Esophagus muscularis mucosa (tissue), 4 donors: ENCODE measurements at regions of chr17 and their contacts with region 1.

Region 1: GRCh38 chr17:40341808-40342503 is 22.6 kb downstream of the GJD3 start:
- DNase-seq: no peak
- H3K4me3 ChIP-seq: peak overlapping the region; percentile 87 to 97 (median 92)
- H3K27ac ChIP-seq: peak overlapping the region; percentile 96 to 98 (median 96)
- H3K4me1 ChIP-seq: peaks cover 62 to 87% (median 84%) of the 10 kb centered on the region in 4 donors
- H3K27me3 ChIP-seq: no peaks in the 10 kb centered on the region
- CTCF ChIP-seq: no peak
- EP300 ChIP-seq: no peak
- POLR2A ChIP-seq: peak; percentile 45

Region 2: DNA sequence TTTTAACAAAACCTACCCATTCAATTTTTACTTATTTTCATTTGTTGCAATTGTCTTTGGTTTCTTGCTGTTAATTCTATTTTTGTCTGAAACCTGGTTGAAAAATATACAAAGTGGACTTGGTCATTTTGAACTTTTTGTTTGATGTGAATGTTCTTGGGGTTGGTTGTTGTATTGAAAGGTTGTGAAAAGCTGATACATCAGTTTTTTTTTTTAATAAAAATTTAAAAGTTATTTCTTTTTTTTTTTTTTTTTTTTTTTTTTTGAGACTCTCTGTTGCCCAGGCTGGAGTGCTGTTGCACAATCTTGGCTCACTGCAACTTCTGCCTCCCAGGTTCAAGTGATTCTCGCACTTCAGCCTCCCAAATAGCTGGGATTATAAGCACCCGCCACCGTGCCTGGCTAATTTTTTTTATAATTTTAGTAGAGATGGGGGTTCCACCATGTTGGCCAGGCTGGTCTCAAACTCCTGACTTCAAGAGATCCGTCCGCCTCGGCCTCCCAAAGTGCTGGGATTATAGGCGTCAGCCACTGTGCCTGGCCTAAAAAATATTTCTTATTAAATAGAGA is 93.9 kb before region 1 on chr17:
- intact Hi-C with region 1: no loop called
- DNase-seq: no peak
- H3K4me3 ChIP-seq: no peak overlapping the region
- H3K27ac ChIP-seq: no peak overlapping the region
- H3K4me1 ChIP-seq: peaks cover 23 to 56% (median 47%) of the 10 kb centered on the region in 4 donors
- H3K27me3 ChIP-seq: no peaks in the 10 kb centered on the region
- CTCF ChIP-seq: no peak
- EP300 ChIP-seq: no peak
- POLR2A ChIP-seq: no peak

Region 3: DNA sequence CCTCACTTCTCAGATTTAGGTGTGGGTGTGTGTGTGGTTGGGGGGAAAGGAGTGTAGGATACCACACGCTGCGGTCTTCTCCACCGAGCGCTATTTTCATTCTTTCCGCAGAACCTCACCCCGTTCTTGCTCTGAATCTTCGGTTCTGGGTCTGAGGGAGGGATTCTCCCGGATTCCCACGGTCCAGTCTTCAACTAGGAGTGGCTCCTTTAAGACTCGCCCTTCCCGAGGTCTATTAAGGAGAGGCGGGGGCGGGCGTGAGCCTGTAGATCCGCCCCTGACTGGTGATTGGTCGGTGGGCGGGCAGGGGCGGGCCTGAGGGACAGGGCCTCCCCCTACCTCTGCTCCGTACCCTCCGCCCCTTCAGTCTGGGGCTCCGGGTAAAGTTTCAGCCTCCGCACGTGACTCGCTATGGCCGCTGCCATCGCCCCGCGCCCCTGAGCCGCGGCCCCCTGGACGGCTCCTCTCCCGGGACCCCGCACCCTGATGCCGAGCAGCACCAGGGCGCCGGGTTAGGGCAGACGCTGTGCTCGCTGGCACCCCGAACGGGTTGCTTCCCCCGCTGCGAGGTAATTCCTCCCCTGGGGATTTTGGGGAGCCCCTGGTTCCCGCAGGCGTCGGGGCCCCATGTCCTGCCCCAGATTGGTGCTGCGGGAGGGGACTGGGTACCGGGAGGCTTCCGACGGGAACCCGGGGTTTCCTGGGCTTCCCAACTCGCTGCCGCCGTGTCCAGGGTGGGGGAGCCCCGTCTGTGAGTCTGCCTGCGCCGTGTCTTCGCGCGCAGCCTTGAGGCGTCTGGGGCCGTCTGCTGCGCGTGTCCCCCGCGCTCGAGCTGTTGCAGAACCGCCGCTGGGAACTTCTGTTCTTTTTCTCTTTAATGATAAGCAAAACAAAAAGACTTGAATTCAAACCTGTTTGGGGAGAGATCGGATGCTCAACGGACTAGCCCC is 23.8 kb before region 1 on chr17:
- intact Hi-C with region 1: loop called (anchors 2 kb)
- DNase-seq: peak; percentile 98
- H3K4me3 ChIP-seq: peak overlapping the region; percentile 90 to 99 (median 94)
- H3K27ac ChIP-seq: peak overlapping the region; percentile 94 to 98 (median 96)
- H3K4me1 ChIP-seq: peaks cover 92 to 95% (median 94%) of the 10 kb centered on the region in 4 donors
- H3K27me3 ChIP-seq: no peaks in the 10 kb centered on the region
- CTCF ChIP-seq: peak in 1 of 3 experiments; percentile 15
- EP300 ChIP-seq: no peak
- POLR2A ChIP-seq: peak; percentile 82

Region 4: GRCh38 chr17:40410082-40410481 is 68.1 kb after region 1 on chr17:
- intact Hi-C with region 1: no loop called
- DNase-seq: no peak
- H3K4me3 ChIP-seq: no peak overlapping the region
- H3K27ac ChIP-seq: no peak overlapping the region
- H3K4me1 ChIP-seq: peaks cover 0 to 2% (median under 1%) of the 10 kb centered on the region in 4 donors
- H3K27me3 ChIP-seq: no peaks in the 10 kb centered on the region
- CTCF ChIP-seq: no peak
- EP300 ChIP-seq: no peak
- POLR2A ChIP-seq: no peak